WTC11 (cell line): ENCODE measurements at regions of chr6 and their contacts with region 1.

Region 1: DNA sequence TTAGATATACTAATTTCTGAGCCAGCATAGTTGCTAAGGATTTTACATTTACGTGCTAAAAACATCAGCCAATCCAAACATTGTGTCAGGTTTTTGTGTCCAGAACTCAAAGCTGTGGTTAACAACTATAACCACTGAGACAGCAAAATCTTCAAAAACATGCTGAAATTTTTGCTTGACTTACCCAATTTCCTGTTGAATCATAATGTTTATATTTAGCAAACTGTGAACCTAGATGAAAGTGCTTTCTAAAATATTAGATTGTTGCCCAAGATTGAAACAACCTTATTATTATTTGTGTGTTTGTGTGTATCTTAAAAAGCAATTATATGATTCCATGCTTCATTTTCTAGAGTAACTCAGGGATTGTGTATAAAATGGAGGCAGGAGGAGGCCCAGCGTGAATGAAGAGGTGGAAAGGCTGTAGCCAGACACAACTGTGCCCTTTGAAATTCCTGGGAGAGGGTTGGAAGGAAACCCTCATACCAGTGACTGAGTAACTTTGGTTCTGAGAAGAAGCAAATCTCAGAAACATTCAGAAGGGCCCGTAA is 48.0 kb downstream of the ARMC2 start:
- DNase-seq: no peak
- ATAC-seq: no peak
- H3K4me3 Mint-ChIP-seq: no peak overlapping the region
- H3K27ac Mint-ChIP-seq: no peak overlapping the region
- H3K4me1 Mint-ChIP-seq: peaks cover 20% of the 10 kb centered on the region
- H3K27me3 Mint-ChIP-seq: no peaks in the 10 kb centered on the region
- CTCF ChIP-seq: no peak

Region 2: DNA sequence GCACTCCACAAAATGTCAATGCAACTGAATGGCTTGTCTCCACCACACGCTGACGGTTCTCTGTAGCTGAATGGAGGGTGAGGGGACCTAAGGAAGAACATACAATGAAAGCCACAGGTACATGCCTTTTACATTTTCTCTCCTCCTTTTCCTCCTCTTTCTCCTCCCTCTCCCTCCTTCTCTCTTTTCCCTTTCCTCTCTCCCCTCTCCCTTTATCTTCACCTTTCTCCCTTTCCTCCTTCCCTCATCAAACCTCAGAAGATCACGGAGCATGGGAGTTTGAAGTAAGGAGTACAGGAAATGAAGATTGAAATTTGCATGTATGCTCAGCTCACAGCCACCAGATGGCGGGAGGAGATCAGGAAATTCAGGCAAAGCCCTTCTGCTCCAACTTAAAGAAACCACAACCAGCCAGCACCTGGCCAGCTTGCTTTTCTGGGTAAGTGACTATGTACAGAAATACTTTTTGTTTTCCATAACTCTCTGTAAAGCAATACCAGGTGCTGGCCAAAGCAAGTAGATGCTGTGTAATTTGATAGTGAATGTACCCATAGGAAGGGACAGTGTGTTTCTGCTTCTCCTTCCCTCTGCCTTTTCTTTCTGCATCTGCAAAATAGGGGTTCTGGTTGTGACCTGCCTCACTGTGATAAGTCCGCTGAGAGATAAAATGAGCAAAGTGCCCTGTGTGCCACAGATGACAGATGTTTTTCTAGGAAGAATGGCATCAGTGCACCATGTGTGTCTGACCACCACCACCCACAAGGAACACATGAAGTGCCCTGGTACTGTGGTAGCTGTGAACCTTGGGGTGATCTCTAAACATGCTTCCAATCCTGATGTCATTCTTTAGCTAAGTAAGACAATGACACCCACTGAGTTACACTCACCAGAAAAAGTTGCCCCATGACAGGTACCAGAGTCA is 354.1 kb before region 1 on chr6:
- CTCF ChIA-PET with region 1: interaction called, 74 read pairs
- POLR2A ChIA-PET with region 1: no interaction called
- DNase-seq: peak; percentile 72
- ATAC-seq: peak; percentile 76
- H3K4me3 Mint-ChIP-seq: peak overlapping the region; percentile 41
- H3K27ac Mint-ChIP-seq: no peak overlapping the region
- H3K4me1 Mint-ChIP-seq: peaks cover 12% of the 10 kb centered on the region
- H3K27me3 Mint-ChIP-seq: peaks cover 7% of the 10 kb centered on the region
- CTCF ChIP-seq: peak; percentile 73

Region 3: DNA sequence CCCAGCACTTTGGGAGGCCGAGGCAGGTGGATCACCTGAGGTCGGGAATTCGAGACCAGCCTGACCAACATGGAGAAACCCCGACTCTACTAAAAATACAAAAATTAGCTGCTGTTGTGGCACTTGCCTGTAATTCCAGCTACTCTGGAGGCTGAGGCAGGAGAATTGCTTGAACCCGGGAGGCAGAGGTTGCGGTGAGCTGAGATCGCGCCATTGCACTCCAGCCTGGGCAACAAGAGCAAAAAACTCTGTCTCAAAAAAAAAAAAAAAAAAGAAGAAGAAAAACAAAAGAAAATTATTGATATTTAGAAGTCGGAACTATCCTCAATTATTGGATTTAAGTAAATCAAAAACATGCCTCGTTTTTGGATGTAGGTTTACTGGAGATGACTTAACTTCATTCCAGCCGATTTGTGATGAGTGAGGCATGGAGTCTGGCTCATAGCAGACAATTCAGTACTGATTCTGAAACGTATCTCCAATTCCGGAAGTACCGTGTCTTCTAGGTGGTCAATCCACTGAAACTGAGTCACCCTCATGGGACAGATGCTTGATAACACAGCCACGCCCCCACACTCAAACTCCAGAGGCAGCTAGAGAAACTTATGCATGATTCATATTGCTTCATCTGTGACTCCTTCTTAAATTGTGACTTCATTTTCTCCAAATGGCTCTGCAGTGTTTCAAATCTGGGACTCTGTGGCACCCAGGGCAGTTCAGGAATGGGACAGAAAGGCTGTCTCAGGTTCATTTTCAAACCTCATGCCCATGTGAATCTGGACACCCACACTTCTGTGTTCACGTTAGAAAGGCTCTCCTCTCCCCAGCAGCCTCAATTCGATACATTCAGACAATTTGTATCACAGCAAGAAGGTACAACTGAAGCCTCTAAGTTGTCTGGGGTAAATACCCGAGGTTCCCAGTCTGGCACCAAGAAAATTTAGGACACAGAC is 158.3 kb before region 1 on chr6:
- CTCF ChIA-PET with region 1: no interaction called
- POLR2A ChIA-PET with region 1: no interaction called
- DNase-seq: no peak
- ATAC-seq: no peak
- H3K4me3 Mint-ChIP-seq: no peak overlapping the region
- H3K27ac Mint-ChIP-seq: no peak overlapping the region
- H3K4me1 Mint-ChIP-seq: peaks cover 62% of the 10 kb centered on the region
- H3K27me3 Mint-ChIP-seq: peaks cover 33% of the 10 kb centered on the region
- CTCF ChIP-seq: no peak

Region 4: DNA sequence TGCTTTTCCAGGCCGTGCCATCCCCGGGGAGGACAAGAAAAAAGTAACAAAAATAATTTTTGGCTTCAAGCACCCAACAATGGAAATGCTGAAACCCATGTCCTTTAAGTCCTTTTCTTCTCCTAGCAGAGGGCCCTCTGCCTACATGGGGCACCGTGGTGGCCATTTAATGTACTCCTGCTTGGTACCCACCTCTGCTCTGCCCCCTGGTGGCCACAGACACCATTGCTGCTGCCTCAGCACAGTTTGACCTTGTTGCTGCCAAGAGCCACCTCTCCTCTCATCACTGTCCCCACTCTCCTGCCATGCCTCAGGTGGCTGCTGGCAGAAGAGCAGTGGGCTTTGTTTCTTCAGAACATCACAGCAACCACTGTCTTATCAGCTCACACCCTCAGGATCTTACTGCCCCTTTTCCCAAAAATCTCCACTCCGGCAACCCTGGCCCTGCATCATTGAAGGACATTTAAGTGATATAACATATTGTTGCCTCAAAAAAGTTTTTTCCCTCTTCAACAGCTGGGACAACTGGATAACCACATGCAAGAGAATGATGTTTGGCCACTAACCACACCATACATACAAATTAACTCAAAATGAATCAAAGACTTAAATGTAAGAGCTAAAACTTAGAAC is 60.9 kb before region 1 on chr6:
- CTCF ChIA-PET with region 1: interaction called, 19 read pairs
- POLR2A ChIA-PET with region 1: no interaction called
- DNase-seq: peak; percentile 89
- ATAC-seq: peak; percentile 64
- H3K4me3 Mint-ChIP-seq: no peak overlapping the region
- H3K27ac Mint-ChIP-seq: no peak overlapping the region
- H3K4me1 Mint-ChIP-seq: peaks cover 26% of the 10 kb centered on the region
- H3K27me3 Mint-ChIP-seq: 0 out of 2 replicates have a peak, but pooled peaks cover 5% of the 10 kb centered on the region
- CTCF ChIP-seq: peak; percentile 99

Region 5: GRCh38 chr6:108872141-108872557 is 24.0 kb before region 1 on chr6:
- CTCF ChIA-PET with region 1: interaction called, 10 read pairs
- POLR2A ChIA-PET with region 1: no interaction called
- DNase-seq: no peak
- ATAC-seq: peak; percentile 14; the same call in 1 of the 2 replicates
- H3K4me3 Mint-ChIP-seq: no peak overlapping the region
- H3K27ac Mint-ChIP-seq: peak overlapping the region; percentile 8; the same call in 1 of the 2 replicates
- H3K4me1 Mint-ChIP-seq: peaks cover 23% of the 10 kb centered on the region
- H3K27me3 Mint-ChIP-seq: no peaks in the 10 kb centered on the region
- CTCF ChIP-seq: no peak

Region 6: GRCh38 chr6:108966855-108967755 is 70.9 kb after region 1 on chr6:
- CTCF ChIA-PET with region 1: interaction called, 14 read pairs
- POLR2A ChIA-PET with region 1: no interaction called
- DNase-seq: peak; percentile 47
- ATAC-seq: peak; percentile 70
- H3K4me3 Mint-ChIP-seq: no peak overlapping the region
- H3K27ac Mint-ChIP-seq: peak overlapping the region; percentile 83
- H3K4me1 Mint-ChIP-seq: peaks cover 35% of the 10 kb centered on the region
- H3K27me3 Mint-ChIP-seq: no peaks in the 10 kb centered on the region; the same call in 1 of the 2 replicates
- CTCF ChIP-seq: no peak